ENCODE measurements at regions of chr6 and their contacts with region 1.

Region 1: GRCh38 chr6:137271245-137272183 is 52.3 kb upstream of the IFNGR1 start:
- DNase-seq: peak in 2 of 4 experiments; percentile 39 to 61
- ATAC-seq: peak; percentile 90
- H3K4me3 ChIP-seq: no peak overlapping the region
- H3K27ac ChIP-seq: no peak overlapping the region
- H3K4me1 ChIP-seq: no peaks in the 10 kb centered on the region
- H3K27me3 ChIP-seq: no peaks in the 10 kb centered on the region; a peak in 1 of 5 replicates
- CTCF ChIP-seq: peak; percentile 74 to 93 (median 79); a peak in 5 of 6 replicates
- EP300 ChIP-seq: no peak
- POLR2A ChIP-seq: no peak
- RAD21 ChIP-seq: peak; percentile 98 to 100

Region 2: GRCh38 chr6:136823128-136823660 is 448.3 kb before region 1 on chr6:
- CTCF ChIA-PET with region 1: no interaction called
- POLR2A ChIA-PET with region 1: no interaction called
- in situ Hi-C with region 1: no loop called
- intact Hi-C with region 1: no loop called
- DNase-seq: no peak
- ATAC-seq: no peak
- H3K4me3 ChIP-seq: peak overlapping the region; percentile 62
- H3K27ac ChIP-seq: peak overlapping the region; percentile 77
- H3K4me1 ChIP-seq: peaks cover 8% of the 10 kb centered on the region in 2 experiments; a peak in 4 of 5 replicates
- H3K27me3 ChIP-seq: no peaks in the 10 kb centered on the region
- CTCF ChIP-seq: 0 out of 6 replicates have a peak, but pooled peaks of 1 of the 3 experiments have one; percentile 1
- EP300 ChIP-seq: no peak
- POLR2A ChIP-seq: no peak
- RAD21 ChIP-seq: no peak

Region 3: GRCh38 chr6:137076277-137077068 is 195.0 kb before region 1 on chr6:
- CTCF ChIA-PET with region 1: no interaction called
- POLR2A ChIA-PET with region 1: no interaction called
- in situ Hi-C with region 1: no loop called
- intact Hi-C with region 1: loop called (anchors 5 kb)
- DNase-seq: peak; percentile 49 to 82 (median 58)
- ATAC-seq: peak; percentile 100
- H3K4me3 ChIP-seq: no peak overlapping the region
- H3K27ac ChIP-seq: no peak overlapping the region
- H3K4me1 ChIP-seq: no peaks in the 10 kb centered on the region
- H3K27me3 ChIP-seq: 0 out of 5 replicates have a peak, but pooled peaks cover 4% of the 10 kb centered on the region in 2 experiments
- CTCF ChIP-seq: peak; percentile 91 to 96 (median 94)
- EP300 ChIP-seq: no peak
- POLR2A ChIP-seq: no peak
- RAD21 ChIP-seq: peak; percentile 96 to 98

Region 4: GRCh38 chr6:137165375-137166246 is 105.9 kb before region 1 on chr6:
- CTCF ChIA-PET with region 1: no interaction called
- POLR2A ChIA-PET with region 1: no interaction called
- in situ Hi-C with region 1: no loop called
- intact Hi-C with region 1: loop called (anchors 5 kb)
- DNase-seq: peak in 3 of 4 experiments; percentile 28 to 76 (median 45)
- ATAC-seq: peak; percentile 78
- H3K4me3 ChIP-seq: no peak overlapping the region
- H3K27ac ChIP-seq: no peak overlapping the region
- H3K4me1 ChIP-seq: peaks cover 0 to 34% of the 10 kb centered on the region in 2 experiments; a peak in 4 of 5 replicates
- H3K27me3 ChIP-seq: no peaks in the 10 kb centered on the region
- CTCF ChIP-seq: peak; percentile 71 to 75 (median 73)
- EP300 ChIP-seq: no peak
- POLR2A ChIP-seq: no peak
- RAD21 ChIP-seq: peak; percentile 82 to 88; a peak in 3 of 4 replicates

Region 5: DNA sequence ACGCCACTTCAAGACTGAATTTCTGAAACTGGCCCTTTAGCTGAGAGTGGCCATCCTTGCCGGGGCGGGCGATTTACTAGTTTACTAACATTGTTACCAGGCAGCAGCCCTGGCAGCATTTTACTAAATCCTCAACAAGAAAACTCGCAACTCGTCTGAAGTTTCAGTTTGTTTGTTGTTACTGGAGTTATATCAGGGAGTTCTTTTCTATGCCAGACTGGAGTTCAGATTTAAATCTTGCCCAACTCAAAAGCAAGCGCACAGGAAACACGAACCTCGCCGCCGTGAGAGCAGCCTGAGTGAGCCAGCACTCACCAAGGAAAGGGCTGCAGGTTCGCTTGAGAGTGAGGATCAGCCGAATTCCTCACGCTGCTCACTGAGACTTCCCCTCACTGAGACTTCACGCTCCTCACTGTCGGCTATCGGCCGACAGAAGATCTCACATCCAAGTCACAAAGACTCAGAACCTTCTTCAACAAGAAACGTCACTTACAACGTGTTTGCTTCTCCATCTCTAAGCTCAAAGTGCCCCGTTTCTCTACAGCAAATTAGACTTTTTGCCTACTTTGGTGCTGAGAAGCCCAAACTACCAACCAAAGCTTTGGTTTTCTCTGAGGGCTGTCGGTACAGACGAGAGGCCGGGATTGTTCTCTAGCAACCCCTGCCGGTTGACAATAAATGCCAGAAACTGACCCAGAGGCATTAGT is 143.8 kb after region 1 on chr6:
- CTCF ChIA-PET with region 1: interaction called, 3 read pairs
- POLR2A ChIA-PET with region 1: no interaction called
- in situ Hi-C with region 1: no loop called
- intact Hi-C with region 1: loop called (anchors 5 kb)
- DNase-seq: peak in 3 of 4 experiments; percentile 16 to 52 (median 42)
- ATAC-seq: peak; percentile 98
- H3K4me3 ChIP-seq: no peak overlapping the region
- H3K27ac ChIP-seq: no peak overlapping the region
- H3K4me1 ChIP-seq: no peaks in the 10 kb centered on the region; a peak in 1 of 5 replicates
- H3K27me3 ChIP-seq: peaks cover 14 to 29% of the 10 kb centered on the region in 2 experiments; a peak in 4 of 5 replicates
- CTCF ChIP-seq: peak; percentile 59 to 77 (median 74)
- EP300 ChIP-seq: no peak
- POLR2A ChIP-seq: no peak
- RAD21 ChIP-seq: peak; percentile 57 to 70

Region 6: DNA sequence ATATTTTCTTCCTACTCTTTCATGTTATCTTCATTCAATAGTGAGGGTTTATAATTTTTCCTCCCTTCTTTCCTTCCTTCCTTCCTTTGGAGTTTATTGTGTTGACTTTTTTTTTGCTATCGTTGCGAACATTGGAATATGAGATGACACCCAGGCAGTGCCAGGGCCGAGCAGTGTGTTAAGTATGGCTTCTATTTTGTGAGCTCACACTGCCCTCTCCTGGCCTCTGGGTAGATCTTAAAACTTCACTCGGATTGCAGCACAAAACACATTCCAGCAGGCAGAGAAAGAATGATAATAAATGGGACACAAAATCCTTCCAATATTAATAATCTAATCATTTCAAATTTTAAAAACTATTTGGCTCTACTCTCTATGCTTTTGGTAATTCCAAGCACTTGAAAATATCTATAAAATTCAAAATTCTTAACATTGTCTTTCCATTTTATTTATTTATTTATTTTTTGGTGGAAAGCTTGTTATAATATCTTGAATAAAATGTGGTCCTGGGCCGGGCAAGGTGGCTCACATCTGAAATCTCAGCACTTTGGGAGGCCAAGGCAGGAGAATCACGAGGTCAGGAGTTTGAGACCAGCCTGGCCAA is 370.1 kb after region 1 on chr6:
- CTCF ChIA-PET with region 1: interaction called, 12 read pairs
- POLR2A ChIA-PET with region 1: no interaction called
- in situ Hi-C with region 1: no loop called
- intact Hi-C with region 1: loop called (anchors 1 kb)
- DNase-seq: peak; percentile 45 to 76 (median 58)
- ATAC-seq: peak; percentile 98
- H3K4me3 ChIP-seq: no peak overlapping the region
- H3K27ac ChIP-seq: no peak overlapping the region
- H3K4me1 ChIP-seq: no peaks in the 10 kb centered on the region
- H3K27me3 ChIP-seq: peaks cover 9 to 10% of the 10 kb centered on the region in 2 experiments; a peak in 3 of 5 replicates
- CTCF ChIP-seq: peak; percentile 71 to 82 (median 75)
- EP300 ChIP-seq: no peak
- POLR2A ChIP-seq: no peak
- RAD21 ChIP-seq: peak; percentile 90 to 95

Region 7: DNA sequence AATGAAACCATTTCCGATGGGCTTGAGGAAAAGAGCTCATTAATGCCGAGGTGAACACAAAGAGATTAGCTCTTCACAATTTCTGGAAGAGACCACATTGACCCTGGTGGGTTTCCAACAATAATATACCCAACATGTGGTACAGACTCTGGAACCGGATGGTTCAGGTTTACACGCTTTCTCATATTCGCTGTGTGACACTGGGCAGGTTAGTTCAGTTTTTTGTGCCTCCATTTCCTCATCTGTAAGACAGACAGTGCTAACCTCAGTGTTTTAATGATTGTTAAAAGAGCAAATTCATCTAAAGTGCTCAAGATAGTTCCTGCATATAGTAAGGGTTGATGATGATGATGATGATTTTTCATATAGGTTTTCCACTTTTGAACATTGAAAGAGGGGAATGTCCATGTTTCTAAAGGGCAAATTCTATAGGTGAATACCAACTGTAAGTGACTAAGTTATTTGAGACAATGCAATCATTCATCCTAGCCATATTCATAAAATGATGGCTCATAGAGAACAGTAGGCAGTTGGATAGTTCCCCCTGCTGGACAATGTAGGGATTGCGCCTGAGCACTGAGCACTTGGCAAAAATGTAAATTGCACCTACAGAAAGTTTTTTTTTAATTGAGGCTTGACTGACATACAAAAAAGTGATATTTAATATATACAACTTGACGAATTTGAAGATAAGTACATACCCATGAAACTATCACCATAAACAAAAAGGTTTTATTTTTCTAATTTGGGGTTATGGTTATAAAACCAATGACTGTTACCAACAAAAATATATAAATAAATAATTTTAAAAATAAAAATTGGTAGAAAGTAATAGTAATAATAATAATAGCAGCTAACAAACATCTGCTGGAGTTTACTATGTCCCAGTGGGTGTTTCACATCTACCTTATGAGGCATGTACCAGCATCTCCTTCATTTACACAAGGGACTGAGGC is 837.8 kb after region 1 on chr6:
- CTCF ChIA-PET with region 1: no interaction called
- POLR2A ChIA-PET with region 1: no interaction called
- in situ Hi-C with region 1: no loop called
- intact Hi-C with region 1: loop called (anchors 10 kb)
- DNase-seq: peak; percentile 61 to 78 (median 64)
- ATAC-seq: peak; percentile 44; the same call in 2 of the 3 replicates
- H3K4me3 ChIP-seq: no peak overlapping the region
- H3K27ac ChIP-seq: no peak overlapping the region
- H3K4me1 ChIP-seq: peaks cover 0 to 12% of the 10 kb centered on the region in 2 experiments; a peak in 2 of 5 replicates
- H3K27me3 ChIP-seq: peaks cover 34 to 39% of the 10 kb centered on the region in 2 experiments
- CTCF ChIP-seq: peak; percentile 77 to 97 (median 93)
- EP300 ChIP-seq: no peak
- POLR2A ChIP-seq: no peak
- RAD21 ChIP-seq: peak; percentile 88 to 91

Measured in K562 (cell line).